Left colon (tissue), 2 donors: ENCODE measurements at regions of chr7 and their contacts with region 1.

Region 1: GRCh38 chr7:130896898-130897514 is 163.0 kb upstream of the KLF14 start:
- DNase-seq: peak; percentile 80 to 82
- ATAC-seq: peak; percentile 42

Region 2: GRCh38 chr7:130752424-130752823 is 144.6 kb before region 1 on chr7:
- intact Hi-C with region 1: no loop called
- DNase-seq: no peak
- ATAC-seq: no peak

Region 3: GRCh38 chr7:130838738-130839137 is 58.3 kb before region 1 on chr7:
- intact Hi-C with region 1: no loop called
- DNase-seq: no peak
- ATAC-seq: no peak

Region 4: GRCh38 chr7:131007394-131008330 is 110.7 kb after region 1 on chr7:
- intact Hi-C with region 1: loop called in 1 of 2 experiments (anchors 10 kb)
- DNase-seq: peak; percentile 81 to 82
- ATAC-seq: peak; percentile 90

Region 5: GRCh38 chr7:131040467-131040932 is 143.5 kb after region 1 on chr7:
- intact Hi-C with region 1: loop called in 1 of 2 experiments (anchors 5 kb)
- DNase-seq: peak; percentile 66 to 68
- ATAC-seq: peak; percentile 95